ENCODE measurements at regions of chr7 and their contacts with region 1.

Region 1: DNA sequence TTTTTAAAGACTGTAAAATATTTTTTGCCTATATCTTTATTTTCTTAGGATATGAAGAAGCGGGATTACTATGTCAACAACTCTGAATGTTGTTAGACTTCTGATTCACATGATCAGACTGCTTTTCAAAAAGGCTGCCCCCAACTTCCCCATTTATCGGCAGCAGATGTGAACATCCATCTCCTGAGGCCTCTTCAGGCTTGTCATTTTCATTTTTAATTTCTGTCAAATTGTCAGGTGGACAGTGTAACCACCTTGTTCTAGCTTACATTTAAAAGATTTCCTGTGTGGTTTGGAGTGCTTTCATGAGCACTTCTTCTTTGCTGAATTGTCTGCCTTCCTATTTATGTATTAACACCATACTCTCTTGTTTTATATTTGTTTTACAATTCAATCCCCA is 78.8 kb upstream of the GSDME start:
- DNase-seq: peak; percentile 33 to 60 (median 56)
- H3K4me3 ChIP-seq: no peak overlapping the region
- H3K4me3 Mint-ChIP-seq: peak overlapping the region in 1 of 2 donors; percentile 11
- H3K27ac ChIP-seq: peak overlapping the region in 1 of 2 donors; percentile 32
- H3K27ac Mint-ChIP-seq: peak overlapping the region in 1 of 7 donors; percentile 35
- H3K4me1 ChIP-seq: peaks cover 47 to 50% of the 10 kb centered on the region in 2 donors
- H3K4me1 Mint-ChIP-seq: peaks cover 51% of the 10 kb centered on the region
- H3K27me3 ChIP-seq: no peaks in the 10 kb centered on the region
- H3K27me3 Mint-ChIP-seq: no peaks in the 10 kb centered on the region
- CTCF ChIP-seq: no peak

Region 2: GRCh38 chr7:23597094-23598091 is 1238.7 kb before region 1 on chr7 and contains the start of gene CCDC126:
- intact Hi-C with region 1: no loop called
- DNase-seq: peak; percentile 82 to 84 (median 83)
- H3K4me3 ChIP-seq: peak within 1 kb of the TSS; percentile 77 to 87 (median 85)
- H3K4me3 Mint-ChIP-seq: peak within 1 kb of the TSS; percentile 83 to 92
- H3K27ac ChIP-seq: peak within 1 kb of the TSS; percentile 72 to 91
- H3K27ac Mint-ChIP-seq: peak within 1 kb of the TSS; percentile 65 to 89 (median 84)
- H3K4me1 ChIP-seq: peaks cover 14 to 15% of the 10 kb centered on the region in 2 donors
- H3K4me1 Mint-ChIP-seq: peaks cover 23% of the 10 kb centered on the region
- H3K27me3 ChIP-seq: no peaks in the 10 kb centered on the region
- H3K27me3 Mint-ChIP-seq: peaks cover 9 to 23% (median 10%) of the 10 kb centered on the region in 3 donors
- CTCF ChIP-seq: no peak
- polyA plus RNA-seq, gene CCDC126: 3.5 to 20.1 (median 17.4) TPM

Region 3: DNA sequence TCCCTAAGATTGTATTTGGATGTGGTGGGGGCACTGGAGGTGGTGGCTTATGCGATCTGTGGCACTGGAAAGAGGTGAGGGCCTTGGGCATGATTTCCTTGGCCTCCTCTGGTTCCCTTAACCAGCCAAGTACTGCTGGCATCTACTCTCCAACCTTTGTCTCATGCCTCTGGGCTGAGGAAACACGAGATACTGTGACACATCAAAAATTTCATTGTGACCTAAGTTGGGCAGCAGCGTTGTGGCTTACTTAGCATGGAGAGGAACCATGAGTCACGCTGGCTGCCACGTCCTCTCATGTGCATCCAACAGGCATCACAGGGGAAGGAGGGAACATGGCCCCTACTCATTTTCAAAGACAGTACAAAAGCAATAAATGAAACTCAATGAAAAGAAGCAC is 49.1 kb before region 1 on chr7:
- intact Hi-C with region 1: loop called in 1 of 2 experiments (anchors 10 kb)
- DNase-seq: peak; percentile 96 to 100 (median 98)
- H3K4me3 ChIP-seq: no peak overlapping the region
- H3K4me3 Mint-ChIP-seq: peak overlapping the region in 1 of 2 donors; percentile 15
- H3K27ac ChIP-seq: peak overlapping the region; percentile 88 to 98
- H3K27ac Mint-ChIP-seq: peak overlapping the region; percentile 97 to 100 (median 99)
- H3K4me1 ChIP-seq: peaks cover 24 to 31% of the 10 kb centered on the region in 2 donors
- H3K4me1 Mint-ChIP-seq: peaks cover 24% of the 10 kb centered on the region
- H3K27me3 ChIP-seq: no peaks in the 10 kb centered on the region
- H3K27me3 Mint-ChIP-seq: no peaks in the 10 kb centered on the region
- CTCF ChIP-seq: no peak

Region 4: GRCh38 chr7:24896031-24896501 is 60.0 kb after region 1 on chr7:
- intact Hi-C with region 1: no loop called
- DNase-seq: no peak
- H3K4me3 ChIP-seq: no peak overlapping the region
- H3K4me3 Mint-ChIP-seq: no peak overlapping the region
- H3K27ac ChIP-seq: no peak overlapping the region
- H3K27ac Mint-ChIP-seq: peak overlapping the region in 2 of 7 donors; percentile 41 to 63
- H3K4me1 ChIP-seq: no peaks in the 10 kb centered on the region
- H3K4me1 Mint-ChIP-seq: peaks cover 13% of the 10 kb centered on the region
- H3K27me3 ChIP-seq: no peaks in the 10 kb centered on the region
- H3K27me3 Mint-ChIP-seq: peaks cover 0 to 3% (median 0%) of the 10 kb centered on the region in 3 donors
- CTCF ChIP-seq: no peak

Region 5: DNA sequence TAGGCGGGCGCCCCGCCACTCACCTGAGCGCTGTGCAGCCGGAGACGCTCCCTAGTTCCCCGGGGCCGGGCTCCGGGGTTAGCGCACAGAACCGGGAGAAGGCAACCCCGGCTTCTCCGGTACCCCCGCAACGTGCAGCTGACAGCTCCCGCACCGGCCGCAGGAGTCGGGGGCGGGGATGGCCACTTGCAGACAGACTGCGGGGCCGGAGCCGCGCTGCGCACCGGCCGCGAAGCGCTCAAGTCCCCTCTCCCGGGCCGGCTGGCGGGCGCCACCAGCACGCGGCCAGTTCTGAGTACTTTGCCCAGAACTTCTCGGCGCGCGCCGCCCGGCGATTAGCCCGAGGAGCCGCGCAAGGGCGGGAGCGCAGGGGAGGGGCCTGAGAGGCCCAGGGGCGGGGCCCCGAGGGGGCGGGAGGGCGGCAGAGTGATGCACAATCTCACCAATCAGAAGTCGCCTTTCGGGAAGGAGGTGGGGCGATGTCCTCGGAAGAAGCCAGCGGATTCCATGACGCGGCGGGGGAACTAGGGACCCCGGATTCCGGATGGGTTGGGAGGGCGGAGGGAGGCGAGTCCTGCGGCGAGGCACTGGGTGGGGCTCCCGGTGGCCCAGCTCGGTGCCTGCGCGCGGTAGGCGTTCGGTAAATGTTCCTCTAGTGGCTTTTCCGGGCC is 143.9 kb after region 1 on chr7 and contains the start of gene OSBPL3:
- intact Hi-C with region 1: loop called in 1 of 2 experiments (anchors 10 kb)
- DNase-seq: peak; percentile 92 to 96 (median 93)
- H3K4me3 ChIP-seq: peak within 1 kb of the TSS; percentile 87 to 94 (median 93)
- H3K4me3 Mint-ChIP-seq: peak within 1 kb of the TSS; percentile 98 to 99
- H3K27ac ChIP-seq: peak within 1 kb of the TSS; percentile 69 to 93
- H3K27ac Mint-ChIP-seq: peak within 1 kb of the TSS; percentile 90 to 97 (median 95)
- H3K4me1 ChIP-seq: peaks cover 34 to 51% of the 10 kb centered on the region in 2 donors
- H3K4me1 Mint-ChIP-seq: peaks cover 46% of the 10 kb centered on the region
- H3K27me3 ChIP-seq: peaks cover 4 to 11% of the 10 kb centered on the region in 2 donors
- H3K27me3 Mint-ChIP-seq: peaks cover 14 to 25% (median 14%) of the 10 kb centered on the region in 3 donors
- CTCF ChIP-seq: peak; percentile 32
- polyA plus RNA-seq, gene OSBPL3: 2.6 to 9.2 (median 3.7) TPM

Measured in CD14-positive monocyte (primary cell).